ENCODE measurements at regions of chr22 and their contacts with region 1.

Region 1: DNA sequence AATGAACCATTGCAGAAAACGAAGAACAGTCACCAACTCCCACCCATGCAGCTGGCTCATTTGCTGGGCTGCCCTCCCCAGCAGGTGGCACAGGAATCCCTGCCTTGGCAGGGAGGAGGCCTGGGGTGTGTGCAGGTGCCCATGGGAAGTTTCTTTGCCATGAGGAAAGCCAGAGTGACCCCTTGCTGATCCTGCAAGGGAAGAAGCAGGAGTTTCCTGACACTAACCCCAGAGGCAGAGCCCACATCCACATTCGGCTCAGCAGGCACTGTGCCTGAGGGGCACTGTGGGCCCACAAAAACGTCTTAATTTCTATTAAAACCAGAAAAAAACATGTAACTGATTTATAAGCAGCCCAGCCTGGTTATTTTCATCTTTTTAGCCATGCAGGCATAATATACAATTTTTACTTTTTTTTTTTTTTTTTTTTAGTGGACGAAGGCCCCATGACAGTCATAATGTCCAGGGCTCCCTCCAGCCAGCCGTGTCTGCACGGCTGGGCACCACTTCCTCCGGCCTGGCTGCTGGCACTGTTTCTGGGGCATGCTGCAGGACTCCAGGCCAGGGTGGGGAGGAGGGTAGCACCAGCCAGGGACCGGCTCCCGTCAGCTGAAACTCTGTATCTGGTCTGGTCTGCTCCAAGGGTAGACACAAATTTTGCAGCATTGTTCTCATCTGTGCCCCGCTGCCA is 8.8 kb upstream of the RRP7A start:
- DNase-seq: no peak
- ATAC-seq: no peak
- H3K4me3 ChIP-seq: no peak overlapping the region
- H3K27ac ChIP-seq: no peak overlapping the region
- H3K4me1 ChIP-seq: no peaks in the 10 kb centered on the region
- H3K27me3 ChIP-seq: no peaks in the 10 kb centered on the region
- CTCF ChIP-seq: no peak

Region 2: DNA sequence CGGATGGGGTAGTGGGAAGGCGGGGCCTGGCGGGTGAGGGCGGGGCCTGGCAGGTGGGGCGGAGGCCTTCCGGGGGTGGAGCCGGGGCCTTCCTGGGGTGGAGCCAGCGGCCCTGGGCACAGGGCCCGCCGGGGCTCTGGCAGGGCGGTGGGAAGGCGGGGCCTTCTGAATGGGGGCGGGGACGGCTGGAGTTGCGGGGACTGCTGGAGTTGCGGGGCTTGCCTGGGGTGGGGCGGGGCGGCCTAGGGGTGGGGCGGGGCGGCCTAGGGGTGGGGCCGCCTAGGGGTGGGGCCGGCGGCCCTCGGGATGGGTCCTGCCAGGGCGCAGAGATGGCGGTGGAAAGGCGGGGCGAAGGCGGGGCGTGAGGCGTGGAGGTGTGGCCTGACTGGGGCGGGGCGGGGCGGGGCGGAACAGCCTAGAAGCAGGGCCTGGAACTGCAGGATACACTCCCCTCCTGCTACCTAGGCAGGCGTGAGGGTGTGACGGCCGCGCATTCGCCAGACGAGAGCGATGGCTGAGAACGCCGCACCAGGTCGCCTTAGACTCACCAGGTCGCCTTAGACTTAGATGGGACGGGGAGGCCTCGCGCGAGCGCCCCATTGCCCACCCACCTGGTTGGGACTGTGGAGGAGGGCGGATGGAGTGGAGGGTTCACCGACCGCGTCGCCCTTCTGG is 28.1 kb before region 1 on chr22:
- CTCF ChIA-PET with region 1: interaction called, 12 read pairs
- POLR2A ChIA-PET with region 1: no interaction called
- in situ Hi-C with region 1: no loop called
- intact Hi-C with region 1: no loop called
- DNase-seq: no peak
- ATAC-seq: peak; percentile 94
- H3K4me3 ChIP-seq: peak overlapping the region; percentile 16 to 27; a peak in 2 of 4 replicates
- H3K27ac ChIP-seq: no peak overlapping the region
- H3K4me1 ChIP-seq: no peaks in the 10 kb centered on the region
- H3K27me3 ChIP-seq: no peaks in the 10 kb centered on the region
- CTCF ChIP-seq: no peak

Region 3: GRCh38 chr22:42577623-42578240 is 49.3 kb after region 1 on chr22:
- CTCF ChIA-PET with region 1: no interaction called
- POLR2A ChIA-PET with region 1: no interaction called
- in situ Hi-C with region 1: no loop called
- intact Hi-C with region 1: no loop called
- DNase-seq: no peak
- ATAC-seq: no peak
- H3K4me3 ChIP-seq: no peak overlapping the region
- H3K27ac ChIP-seq: no peak overlapping the region
- H3K4me1 ChIP-seq: no peaks in the 10 kb centered on the region
- H3K27me3 ChIP-seq: no peaks in the 10 kb centered on the region
- CTCF ChIP-seq: no peak

Region 4: DNA sequence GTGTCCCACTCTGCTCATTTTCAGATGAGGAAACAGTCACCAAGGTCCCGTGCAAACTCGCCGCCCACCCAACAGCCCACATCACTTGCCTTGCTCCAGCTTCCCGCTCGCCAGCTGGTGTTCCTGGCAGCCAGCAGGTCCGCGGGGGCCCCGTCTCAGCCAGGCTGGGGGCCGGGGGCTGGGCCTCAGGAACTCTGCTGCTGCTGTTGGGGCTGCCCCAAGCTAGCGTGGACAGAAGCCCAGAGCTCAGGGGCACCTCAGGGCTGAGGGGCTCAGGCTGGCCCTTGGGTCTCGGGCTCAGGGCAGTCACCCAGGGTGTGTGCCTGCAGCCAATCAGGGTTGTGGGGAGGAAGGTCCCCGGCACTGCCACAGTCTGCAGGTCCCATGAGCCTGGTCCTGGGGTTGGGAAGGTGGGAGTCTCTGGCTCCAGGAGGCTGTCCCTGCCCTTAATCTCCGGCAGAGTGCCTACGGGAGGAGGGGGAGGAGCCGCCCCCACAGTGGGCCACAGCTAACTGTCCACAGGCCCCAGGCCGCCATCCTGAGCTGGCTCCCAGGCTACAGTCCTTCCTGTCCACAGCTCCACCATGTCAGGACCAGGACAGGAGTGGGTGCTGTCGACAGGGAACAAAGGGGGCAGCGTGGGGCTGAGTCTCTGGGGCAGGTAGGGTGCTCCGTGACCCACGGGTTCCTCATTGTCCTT is 263.5 kb after region 1 on chr22:
- CTCF ChIA-PET with region 1: no interaction called
- POLR2A ChIA-PET with region 1: no interaction called
- in situ Hi-C with region 1: no loop called
- intact Hi-C with region 1: no loop called
- DNase-seq: no peak
- ATAC-seq: no peak
- H3K4me3 ChIP-seq: no peak overlapping the region
- H3K27ac ChIP-seq: no peak overlapping the region
- H3K4me1 ChIP-seq: no peaks in the 10 kb centered on the region
- H3K27me3 ChIP-seq: no peaks in the 10 kb centered on the region
- CTCF ChIP-seq: no peak